Heart left ventricle (tissue), 16 donors: ENCODE measurements at regions of chr5 and their contacts with region 1.

Region 1: DNA sequence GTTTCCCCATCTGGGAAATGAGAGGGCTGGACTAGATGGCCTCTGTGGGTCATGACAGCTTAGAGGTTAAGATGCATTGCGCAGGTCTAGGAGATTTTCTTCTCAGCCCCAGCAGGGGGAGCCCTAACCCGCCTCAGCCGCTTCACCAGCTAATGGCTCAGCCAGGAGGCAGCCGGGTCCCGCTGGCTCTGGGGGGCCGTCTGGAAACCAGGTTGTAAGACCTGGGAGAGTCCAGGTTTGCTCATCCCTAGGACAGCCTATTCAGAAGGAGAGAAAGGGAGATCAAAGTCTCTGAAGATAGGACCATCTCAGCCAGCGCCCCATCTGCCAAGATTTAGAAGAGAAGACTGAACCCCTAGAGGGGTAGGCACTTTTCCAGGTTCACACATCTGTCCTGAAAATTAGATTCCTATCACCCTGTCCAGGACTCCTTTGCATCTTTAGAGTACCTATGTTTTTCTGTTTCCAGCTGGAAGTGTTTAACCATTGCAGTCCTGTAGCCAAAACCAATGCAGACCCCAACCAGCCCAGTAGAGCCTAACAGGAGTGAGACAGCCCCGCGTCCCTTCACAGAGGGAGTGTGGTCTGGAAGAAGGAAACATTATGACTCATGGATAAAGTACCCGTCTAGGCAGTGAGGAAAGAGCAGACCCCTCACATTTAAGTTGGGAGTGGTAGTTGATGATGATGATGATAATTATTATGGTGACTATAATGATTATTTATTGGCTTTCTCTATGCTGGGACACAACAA is 27.5 kb downstream of the SPARC start:
- DNase-seq: peak; percentile 84 to 92 (median 87)
- ATAC-seq: peak; percentile 75 to 87 (median 86)
- H3K4me3 ChIP-seq: no peak overlapping the region
- H3K27ac ChIP-seq: peak overlapping the region in 9 of 12 donors; percentile 4 to 52 (median 28)
- H3K4me1 ChIP-seq: peaks cover 3 to 39% (median 23%) of the 10 kb centered on the region in 12 donors
- H3K27me3 ChIP-seq: no peaks in the 10 kb centered on the region
- CTCF ChIP-seq: peak; percentile 80 to 98 (median 92)
- POLR2A ChIP-seq: no peak

Region 2: DNA sequence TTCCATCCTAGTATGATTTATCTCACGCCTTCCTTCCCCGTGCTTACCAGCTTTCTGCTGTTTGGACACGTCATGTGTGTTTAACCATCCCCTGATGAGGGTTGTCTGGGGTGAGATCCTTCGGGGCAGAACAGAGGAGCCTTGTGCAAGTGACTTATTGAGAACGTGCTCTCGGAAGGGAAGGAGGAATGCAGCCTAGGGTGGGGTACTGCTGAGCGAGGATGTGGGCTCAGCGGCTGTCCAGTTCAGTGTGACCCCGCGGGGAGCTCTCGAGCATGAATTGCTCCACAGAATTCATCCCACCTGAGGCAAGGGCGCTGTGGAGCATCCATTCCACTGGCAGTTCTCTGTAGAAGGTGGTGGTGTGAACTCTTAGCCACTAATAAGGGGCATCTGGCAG is 994.1 kb before region 1 on chr5:
- intact Hi-C with region 1: no loop called
- DNase-seq: no peak
- ATAC-seq: no peak
- H3K4me3 ChIP-seq: no peak overlapping the region
- H3K27ac ChIP-seq: no peak overlapping the region
- H3K4me1 ChIP-seq: peaks cover 0 to 14% (median 2%) of the 10 kb centered on the region in 12 donors
- H3K27me3 ChIP-seq: no peaks in the 10 kb centered on the region
- CTCF ChIP-seq: no peak
- POLR2A ChIP-seq: no peak

Region 3: GRCh38 chr5:151270599-151270998 is 388.6 kb before region 1 on chr5:
- intact Hi-C with region 1: no loop called
- DNase-seq: no peak
- ATAC-seq: no peak
- H3K4me3 ChIP-seq: no peak overlapping the region
- H3K27ac ChIP-seq: no peak overlapping the region
- H3K4me1 ChIP-seq: peaks cover 0 to 14% (median 0%) of the 10 kb centered on the region in 12 donors
- H3K27me3 ChIP-seq: no peaks in the 10 kb centered on the region
- CTCF ChIP-seq: no peak
- POLR2A ChIP-seq: no peak

Region 4: DNA sequence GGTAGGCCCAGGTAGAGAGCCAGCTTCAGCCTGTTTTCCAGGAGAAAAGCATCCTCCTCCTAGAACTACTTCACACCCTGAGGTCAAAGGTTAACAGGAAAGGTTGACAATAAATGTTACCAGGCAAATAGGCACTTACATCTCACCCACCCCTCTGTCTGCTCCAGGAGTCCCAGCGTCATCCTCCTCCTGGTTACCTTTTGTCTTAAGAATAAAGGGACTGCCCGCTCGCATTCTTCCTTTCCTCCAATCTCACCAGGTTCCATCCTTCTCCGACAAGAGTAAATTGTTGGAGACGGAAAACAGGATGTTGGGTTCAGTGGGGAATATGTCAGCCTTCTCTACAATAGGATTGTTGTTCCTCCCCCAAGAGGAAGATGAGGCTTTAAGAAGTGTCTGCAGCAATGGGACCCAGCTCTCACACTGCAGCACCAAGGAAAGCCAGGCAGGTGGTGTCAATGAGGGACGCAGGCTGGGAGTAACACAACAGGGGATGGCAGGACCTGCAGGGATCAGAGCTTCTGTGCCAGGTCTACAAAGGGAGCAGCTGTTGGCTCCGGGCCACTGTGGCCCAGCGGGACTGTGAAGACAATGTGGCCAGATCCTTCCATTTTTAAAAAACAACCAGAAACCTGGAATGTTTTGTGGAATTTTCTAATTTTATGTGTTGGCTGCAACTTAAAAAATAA is 97.0 kb before region 1 on chr5:
- intact Hi-C with region 1: no loop called
- DNase-seq: no peak
- ATAC-seq: no peak
- H3K4me3 ChIP-seq: no peak overlapping the region
- H3K27ac ChIP-seq: no peak overlapping the region
- H3K4me1 ChIP-seq: no peaks in the 10 kb centered on the region
- H3K27me3 ChIP-seq: no peaks in the 10 kb centered on the region
- CTCF ChIP-seq: no peak
- POLR2A ChIP-seq: no peak

Region 5: GRCh38 chr5:151615431-151615830 is 43.7 kb before region 1 on chr5:
- intact Hi-C with region 1: no loop called
- DNase-seq: no peak
- ATAC-seq: no peak
- H3K4me3 ChIP-seq: no peak overlapping the region
- H3K27ac ChIP-seq: no peak overlapping the region
- H3K4me1 ChIP-seq: no peaks in the 10 kb centered on the region
- H3K27me3 ChIP-seq: peaks cover 0 to 26% (median 0%) of the 10 kb centered on the region in 9 donors
- CTCF ChIP-seq: no peak
- POLR2A ChIP-seq: no peak

Region 6: DNA sequence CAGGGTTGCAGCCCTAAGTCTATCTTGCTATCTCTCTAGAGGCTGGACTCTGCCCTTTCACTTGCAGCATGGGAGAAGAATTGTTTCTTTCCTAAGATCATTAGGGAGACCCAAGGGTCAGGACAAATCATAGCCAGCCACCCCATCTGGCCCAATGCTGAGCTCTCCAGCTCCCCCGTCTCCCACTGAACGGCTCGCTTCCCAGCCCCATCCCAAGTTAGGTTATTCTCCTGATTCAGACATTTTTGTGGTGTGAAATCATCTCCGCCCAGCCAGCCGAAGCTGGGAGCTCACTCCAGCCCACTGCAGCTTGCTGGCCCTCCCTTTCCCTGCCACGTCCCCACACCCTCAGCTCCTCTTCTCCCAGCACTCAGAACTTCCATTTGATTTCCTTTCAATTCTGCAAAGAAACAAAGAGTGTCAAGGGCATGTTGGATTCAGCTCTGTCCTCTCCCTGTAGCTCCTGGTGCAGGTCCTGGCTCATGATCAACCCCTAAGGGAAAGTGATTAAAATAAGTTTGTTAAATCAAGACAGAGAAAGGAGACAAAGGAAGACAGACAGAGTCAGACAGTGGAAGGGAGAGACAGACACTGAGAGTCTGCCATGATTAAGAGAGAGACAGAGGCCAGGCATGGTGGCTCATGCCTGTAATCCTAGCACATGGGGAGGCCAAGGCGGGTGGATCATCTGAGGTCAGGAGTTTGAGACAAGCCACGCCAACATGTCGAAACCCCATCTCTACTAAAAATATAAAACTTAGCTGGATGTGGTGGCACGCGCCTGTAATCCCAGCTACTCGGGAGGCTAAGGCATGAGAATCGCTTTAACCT is 40.1 kb after region 1 on chr5:
- intact Hi-C with region 1: loop called in 4 of 10 experiments (anchors 5 kb)
- DNase-seq: peak; percentile 82 to 89 (median 83)
- ATAC-seq: peak; percentile 57 to 90 (median 88)
- H3K4me3 ChIP-seq: no peak overlapping the region
- H3K27ac ChIP-seq: peak overlapping the region; percentile 70 to 94 (median 80)
- H3K4me1 ChIP-seq: peaks cover 0 to 50% (median 14%) of the 10 kb centered on the region in 12 donors
- H3K27me3 ChIP-seq: no peaks in the 10 kb centered on the region
- CTCF ChIP-seq: no peak
- POLR2A ChIP-seq: no peak

Region 7: GRCh38 chr5:151719228-151720000 is 60.2 kb after region 1 on chr5:
- intact Hi-C with region 1: loop called in 9 of 10 experiments (anchors 1 to 5 kb)
- DNase-seq: peak in 2 of 5 donors; percentile 37 to 41
- ATAC-seq: peak in 3 of 4 donors; percentile 42 to 75 (median 58)
- H3K4me3 ChIP-seq: no peak overlapping the region
- H3K27ac ChIP-seq: peak overlapping the region in 8 of 12 donors; percentile 16 to 80 (median 40)
- H3K4me1 ChIP-seq: peaks cover 0 to 50% (median 10%) of the 10 kb centered on the region in 12 donors
- H3K27me3 ChIP-seq: no peaks in the 10 kb centered on the region
- CTCF ChIP-seq: peak; percentile 49 to 69 (median 60)
- POLR2A ChIP-seq: no peak